Astrocyte of the cerebellum (primary cell): ENCODE measurements at regions of chr4 and their contacts with region 1.

Region 1: GRCh38 chr4:168636506-168637196 is 139.8 kb downstream of the PALLD start:
- DNase-seq: no peak
- H3K4me3 ChIP-seq: no peak overlapping the region
- CTCF ChIP-seq: no peak

Region 2: DNA sequence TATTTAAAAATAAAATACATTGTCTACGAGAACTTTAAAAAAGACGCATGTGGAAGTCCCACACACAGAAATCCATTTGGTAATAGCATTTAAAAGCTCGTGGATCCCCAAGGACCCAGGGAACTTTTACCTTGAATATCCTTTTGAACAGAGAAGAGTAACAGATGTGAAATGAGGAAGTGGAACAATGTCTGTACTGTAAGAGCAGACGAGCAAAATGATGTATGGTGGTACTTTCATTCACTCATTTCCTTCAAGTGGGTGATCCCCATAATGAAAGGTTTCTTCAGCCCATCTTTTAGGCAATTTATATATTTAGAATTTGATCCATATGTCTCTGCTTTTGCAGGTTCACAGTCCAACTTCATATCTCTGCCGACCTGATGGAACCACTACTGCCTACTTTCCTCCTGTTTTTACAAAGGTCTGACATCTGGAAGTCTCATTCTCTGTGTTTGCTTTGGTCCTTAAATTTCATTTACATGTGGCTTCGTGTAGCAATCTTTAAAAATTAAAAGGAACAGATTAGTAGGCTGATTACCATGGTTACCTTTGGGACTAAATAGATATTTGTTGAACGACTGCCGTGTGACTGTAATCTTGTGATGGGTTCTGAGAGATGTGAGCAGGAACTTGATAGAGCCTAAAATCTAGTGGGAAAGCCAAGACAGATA is 48.6 kb after region 1 on chr4:
- in situ Hi-C with region 1: loop called (anchors 5 kb)
- DNase-seq: no peak
- H3K4me3 ChIP-seq: no peak overlapping the region
- CTCF ChIP-seq: no peak

Region 3: DNA sequence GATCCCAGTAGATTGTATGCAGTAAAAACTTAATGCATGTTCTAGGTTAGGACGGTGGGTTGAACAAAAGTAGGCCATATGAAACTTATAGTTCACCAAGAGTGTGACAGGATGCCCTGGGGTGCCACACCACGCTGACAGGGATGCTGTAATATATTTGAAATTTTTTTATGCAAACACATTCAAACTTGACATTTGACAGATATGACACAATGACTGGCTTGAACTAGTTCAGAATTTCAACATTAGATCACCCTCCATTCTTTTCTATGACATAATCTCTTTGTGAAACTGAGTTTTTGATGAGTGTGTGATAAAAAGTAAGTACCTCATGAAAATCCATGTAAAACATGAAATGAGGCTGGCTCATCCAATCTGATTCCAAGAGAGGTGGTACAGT is 58.6 kb after region 1 on chr4:
- in situ Hi-C with region 1: no loop called
- DNase-seq: no peak
- H3K4me3 ChIP-seq: no peak overlapping the region
- CTCF ChIP-seq: no peak